ENCODE measurements at regions of chr5 and their contacts with region 1.

Region 1: GRCh38 chr5:66306105-66306843 is 162.2 kb downstream of the SREK1 start:
- DNase-seq: no peak
- ATAC-seq: peak; percentile 95
- H3K4me3 ChIP-seq: no peak overlapping the region
- H3K27ac ChIP-seq: no peak overlapping the region
- H3K4me1 ChIP-seq: no peaks in the 10 kb centered on the region
- H3K27me3 ChIP-seq: peaks cover 0 to 1% of the 10 kb centered on the region in 2 experiments; a peak in 1 of 4 replicates
- CTCF ChIP-seq: peak; percentile 66 to 96 (median 89)
- EP300 ChIP-seq: no peak
- POLR2A ChIP-seq: no peak
- RAD21 ChIP-seq: peak; percentile 57

Region 2: DNA sequence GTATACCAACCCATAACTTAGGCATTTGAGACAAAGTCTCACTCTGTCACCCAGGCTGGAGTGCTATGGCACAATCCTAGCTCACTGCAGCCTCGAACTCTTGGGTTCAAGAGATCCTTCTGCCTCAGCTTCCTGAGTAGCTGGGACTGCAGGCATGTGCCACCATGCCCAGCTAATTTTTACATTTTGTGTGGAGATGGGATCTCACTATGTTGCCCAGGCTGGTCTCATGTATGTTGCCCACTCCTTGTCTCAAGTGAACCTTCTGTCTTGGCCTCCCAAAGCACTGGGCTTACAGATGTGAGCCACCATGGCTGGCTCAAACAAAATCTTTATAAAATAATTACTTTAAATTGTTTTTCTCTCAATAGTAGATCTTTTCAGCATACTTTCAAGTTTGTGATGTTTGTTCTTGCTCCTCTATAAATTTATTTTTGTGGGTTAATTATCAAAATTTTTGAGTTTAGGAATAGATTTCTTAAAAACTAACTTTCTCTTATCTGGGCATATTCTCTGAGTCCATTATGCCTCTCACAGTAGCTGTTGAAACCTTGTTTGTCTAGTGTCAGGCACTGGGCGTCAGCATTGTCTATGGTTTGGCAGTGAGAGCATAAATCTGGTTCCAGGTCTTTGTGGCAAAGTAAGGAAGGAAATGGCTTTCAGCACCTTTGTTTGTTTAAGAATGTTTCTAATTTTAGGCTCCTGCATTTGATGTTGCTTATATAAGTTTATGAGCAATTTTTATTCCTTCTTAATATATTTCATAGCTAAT is 545.6 kb before region 1 on chr5:
- CTCF ChIA-PET with region 1: interaction called, 20 read pairs
- POLR2A ChIA-PET with region 1: no interaction called
- RAD21 ChIA-PET with region 1: no interaction called
- SMC1A ChIA-PET with region 1: no interaction called
- in situ Hi-C with region 1: no loop called
- intact Hi-C with region 1: no loop called
- DNase-seq: peak; percentile 8
- ATAC-seq: peak; percentile 83
- H3K4me3 ChIP-seq: no peak overlapping the region
- H3K27ac ChIP-seq: no peak overlapping the region
- H3K4me1 ChIP-seq: no peaks in the 10 kb centered on the region
- H3K27me3 ChIP-seq: no peaks in the 10 kb centered on the region
- CTCF ChIP-seq: peak; percentile 40 to 66 (median 57); a peak in 4 of 6 replicates
- EP300 ChIP-seq: no peak
- POLR2A ChIP-seq: no peak
- RAD21 ChIP-seq: peak; percentile 88

Region 3: GRCh38 chr5:66291771-66292170 is 14.5 kb before region 1 on chr5:
- CTCF ChIA-PET with region 1: interaction called, 18 read pairs
- POLR2A ChIA-PET with region 1: no interaction called
- RAD21 ChIA-PET with region 1: interaction called, 4 read pairs
- SMC1A ChIA-PET with region 1: interaction called, 14 read pairs
- in situ Hi-C with region 1: no loop called
- intact Hi-C with region 1: no loop called
- DNase-seq: no peak
- ATAC-seq: no peak
- H3K4me3 ChIP-seq: no peak overlapping the region
- H3K27ac ChIP-seq: no peak overlapping the region
- H3K4me1 ChIP-seq: no peaks in the 10 kb centered on the region
- H3K27me3 ChIP-seq: peaks cover 0 to 2% of the 10 kb centered on the region in 2 experiments; a peak in 1 of 4 replicates
- CTCF ChIP-seq: no peak
- EP300 ChIP-seq: no peak
- POLR2A ChIP-seq: no peak
- RAD21 ChIP-seq: no peak

Region 4: GRCh38 chr5:66343370-66344071 is 37.2 kb after region 1 on chr5:
- CTCF ChIA-PET with region 1: interaction called, 40 read pairs
- POLR2A ChIA-PET with region 1: no interaction called
- RAD21 ChIA-PET with region 1: no interaction called
- SMC1A ChIA-PET with region 1: interaction called, 5 read pairs
- in situ Hi-C with region 1: no loop called
- intact Hi-C with region 1: no loop called
- DNase-seq: no peak
- ATAC-seq: no peak
- H3K4me3 ChIP-seq: no peak overlapping the region
- H3K27ac ChIP-seq: no peak overlapping the region
- H3K4me1 ChIP-seq: no peaks in the 10 kb centered on the region
- H3K27me3 ChIP-seq: peaks cover 0 to 2% of the 10 kb centered on the region in 2 experiments; a peak in 1 of 4 replicates
- CTCF ChIP-seq: no peak
- EP300 ChIP-seq: no peak
- POLR2A ChIP-seq: no peak
- RAD21 ChIP-seq: no peak

Region 5: GRCh38 chr5:66498791-66499207 is 192.5 kb after region 1 on chr5:
- CTCF ChIA-PET with region 1: interaction called, 14 read pairs
- POLR2A ChIA-PET with region 1: no interaction called
- RAD21 ChIA-PET with region 1: interaction called, 3 read pairs
- SMC1A ChIA-PET with region 1: interaction called, 5 read pairs
- in situ Hi-C with region 1: no loop called
- intact Hi-C with region 1: loop called (anchors 5 kb)
- DNase-seq: no peak
- ATAC-seq: peak; percentile 53; the same call in 2 of the 3 replicates
- H3K4me3 ChIP-seq: no peak overlapping the region
- H3K27ac ChIP-seq: no peak overlapping the region
- H3K4me1 ChIP-seq: no peaks in the 10 kb centered on the region
- H3K27me3 ChIP-seq: no peaks in the 10 kb centered on the region
- CTCF ChIP-seq: peak in 2 of 3 experiments; percentile 20 to 35; a peak in 3 of 6 replicates
- EP300 ChIP-seq: no peak
- POLR2A ChIP-seq: no peak
- RAD21 ChIP-seq: peak; percentile 47

Region 6: GRCh38 chr5:66764982-66765381 is 458.7 kb after region 1 on chr5:
- CTCF ChIA-PET with region 1: interaction called, 137 read pairs
- POLR2A ChIA-PET with region 1: no interaction called
- RAD21 ChIA-PET with region 1: interaction called, 9 read pairs
- SMC1A ChIA-PET with region 1: interaction called, 6 read pairs
- in situ Hi-C with region 1: no loop called
- intact Hi-C with region 1: no loop called
- DNase-seq: no peak
- ATAC-seq: no peak
- H3K4me3 ChIP-seq: no peak overlapping the region
- H3K27ac ChIP-seq: no peak overlapping the region
- H3K4me1 ChIP-seq: no peaks in the 10 kb centered on the region
- H3K27me3 ChIP-seq: no peaks in the 10 kb centered on the region
- CTCF ChIP-seq: no peak
- EP300 ChIP-seq: no peak
- POLR2A ChIP-seq: no peak
- RAD21 ChIP-seq: no peak

Region 7: GRCh38 chr5:67209142-67209771 is 903.0 kb after region 1 on chr5:
- CTCF ChIA-PET with region 1: interaction called, 6 read pairs
- POLR2A ChIA-PET with region 1: no interaction called
- RAD21 ChIA-PET with region 1: interaction called, 7 read pairs
- SMC1A ChIA-PET with region 1: interaction called, 4 read pairs
- in situ Hi-C with region 1: no loop called
- intact Hi-C with region 1: loop called (anchors 5 kb)
- DNase-seq: no peak
- ATAC-seq: peak; percentile 56
- H3K4me3 ChIP-seq: no peak overlapping the region
- H3K27ac ChIP-seq: no peak overlapping the region
- H3K4me1 ChIP-seq: peaks cover 38% of the 10 kb centered on the region
- H3K27me3 ChIP-seq: no peaks in the 10 kb centered on the region
- CTCF ChIP-seq: peak; percentile 68 to 88 (median 71)
- EP300 ChIP-seq: no peak
- POLR2A ChIP-seq: no peak
- RAD21 ChIP-seq: peak; percentile 78